WTC11 (cell line): ENCODE measurements at regions of chr4 and their contacts with region 1.

Region 1: GRCh38 chr4:154928640-154929257 is 147.7 kb downstream of the RBM46 start:
- DNase-seq: peak; percentile 40
- ATAC-seq: peak; percentile 75
- H3K4me3 Mint-ChIP-seq: no peak overlapping the region
- H3K27ac Mint-ChIP-seq: no peak overlapping the region
- H3K4me1 Mint-ChIP-seq: no peaks in the 10 kb centered on the region
- H3K27me3 Mint-ChIP-seq: no peaks in the 10 kb centered on the region
- CTCF ChIP-seq: peak; percentile 45; the same call in 1 of the 2 replicates

Region 2: GRCh38 chr4:154626793-154627484 is 301.8 kb before region 1 on chr4:
- CTCF ChIA-PET with region 1: interaction called, 11 read pairs
- POLR2A ChIA-PET with region 1: no interaction called
- DNase-seq: peak; percentile 84
- ATAC-seq: peak; percentile 94
- H3K4me3 Mint-ChIP-seq: no peak overlapping the region
- H3K27ac Mint-ChIP-seq: no peak overlapping the region
- H3K4me1 Mint-ChIP-seq: peaks cover 6% of the 10 kb centered on the region
- H3K27me3 Mint-ChIP-seq: peaks cover 10% of the 10 kb centered on the region
- CTCF ChIP-seq: peak; percentile 41; the same call in 1 of the 2 replicates

Region 3: DNA sequence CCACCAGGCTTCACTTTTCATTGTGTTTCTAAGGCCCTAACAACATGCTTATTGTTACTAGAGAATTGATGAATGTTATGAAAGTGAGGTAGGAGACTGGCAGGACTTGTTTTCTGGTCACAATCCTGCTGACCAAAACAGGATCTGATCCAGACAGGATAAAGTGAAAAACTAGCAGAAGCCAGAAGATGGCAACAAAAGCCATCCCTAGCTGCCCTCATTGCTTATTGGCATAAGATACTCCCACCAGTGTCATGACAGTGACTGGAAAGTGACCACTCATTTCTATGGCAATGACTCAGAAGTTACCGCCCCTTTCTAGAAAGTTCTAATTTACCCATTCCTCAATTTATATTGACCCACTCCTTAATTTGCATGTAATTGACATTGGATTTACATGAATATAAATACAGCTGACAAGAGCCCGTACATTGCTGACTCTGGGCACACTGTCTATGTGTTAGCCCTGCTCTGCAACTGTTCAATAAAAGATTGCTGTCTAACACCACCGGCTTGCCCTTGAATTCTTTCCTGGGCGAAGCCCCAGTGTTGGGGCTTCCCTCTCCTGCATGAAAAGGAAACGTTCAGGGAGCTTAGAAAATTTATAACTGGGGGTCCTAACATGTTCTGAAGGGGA is 286.3 kb before region 1 on chr4:
- CTCF ChIA-PET with region 1: interaction called, 23 read pairs
- POLR2A ChIA-PET with region 1: no interaction called
- DNase-seq: no peak
- ATAC-seq: peak; percentile 82
- H3K4me3 Mint-ChIP-seq: no peak overlapping the region
- H3K27ac Mint-ChIP-seq: no peak overlapping the region
- H3K4me1 Mint-ChIP-seq: peaks cover 12% of the 10 kb centered on the region
- H3K27me3 Mint-ChIP-seq: no peaks in the 10 kb centered on the region
- CTCF ChIP-seq: no peak

Region 4: DNA sequence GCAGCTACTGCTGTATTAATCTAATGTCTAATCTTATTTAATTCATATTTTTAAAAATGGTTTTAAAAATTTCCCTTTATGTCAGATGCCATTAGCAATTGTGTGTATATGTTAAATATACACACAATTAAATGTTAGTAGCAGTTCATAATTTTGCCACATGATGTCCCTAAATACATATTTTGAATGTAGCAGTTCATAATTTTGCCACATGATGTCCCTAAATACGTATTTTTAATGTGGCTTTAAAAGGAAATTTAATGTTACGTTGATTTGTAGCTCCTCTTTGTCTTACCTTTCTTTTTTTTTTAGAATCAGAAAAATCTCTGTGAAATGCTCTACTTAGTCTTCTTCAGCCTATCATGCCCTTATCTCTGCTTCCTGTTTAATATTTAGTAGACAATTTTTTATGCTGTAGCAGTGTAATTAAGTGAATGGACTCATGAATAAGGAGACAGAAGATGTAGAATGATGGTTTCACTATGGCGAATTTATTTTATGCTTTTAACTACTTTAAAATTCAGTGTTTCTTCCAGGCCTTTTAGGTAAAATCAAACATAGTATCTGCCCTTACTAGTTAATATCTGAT is 121.6 kb before region 1 on chr4:
- CTCF ChIA-PET with region 1: interaction called, 19 read pairs
- POLR2A ChIA-PET with region 1: no interaction called
- DNase-seq: no peak
- ATAC-seq: no peak
- H3K4me3 Mint-ChIP-seq: no peak overlapping the region
- H3K27ac Mint-ChIP-seq: no peak overlapping the region
- H3K4me1 Mint-ChIP-seq: no peaks in the 10 kb centered on the region
- H3K27me3 Mint-ChIP-seq: no peaks in the 10 kb centered on the region
- CTCF ChIP-seq: no peak; the same call in 1 of the 2 replicates

Region 5: DNA sequence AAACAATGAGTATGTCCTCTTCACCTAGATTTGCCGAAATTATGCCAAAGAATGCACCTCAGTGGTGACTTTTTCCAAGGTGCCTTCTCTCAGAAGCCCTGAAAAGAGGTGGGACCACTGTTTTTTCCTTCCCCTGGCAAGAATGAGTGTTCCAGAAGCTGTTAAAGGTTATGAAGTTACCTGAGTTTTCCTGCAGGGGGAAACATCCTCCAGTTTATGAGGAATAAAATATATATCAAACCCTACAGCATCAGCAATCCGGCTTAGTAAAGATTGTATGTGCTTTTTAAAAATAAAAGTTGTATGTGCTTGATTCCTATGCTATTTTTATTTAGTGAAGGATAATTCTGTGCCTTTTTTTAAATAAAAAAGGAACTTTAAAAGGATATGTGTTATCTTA is 74.4 kb before region 1 on chr4:
- CTCF ChIA-PET with region 1: interaction called, 22 read pairs
- POLR2A ChIA-PET with region 1: no interaction called
- DNase-seq: no peak
- ATAC-seq: peak; percentile 79
- H3K4me3 Mint-ChIP-seq: no peak overlapping the region
- H3K27ac Mint-ChIP-seq: no peak overlapping the region
- H3K4me1 Mint-ChIP-seq: peaks cover 5% of the 10 kb centered on the region
- H3K27me3 Mint-ChIP-seq: no peaks in the 10 kb centered on the region
- CTCF ChIP-seq: no peak; the same call in 1 of the 2 replicates

Region 6: DNA sequence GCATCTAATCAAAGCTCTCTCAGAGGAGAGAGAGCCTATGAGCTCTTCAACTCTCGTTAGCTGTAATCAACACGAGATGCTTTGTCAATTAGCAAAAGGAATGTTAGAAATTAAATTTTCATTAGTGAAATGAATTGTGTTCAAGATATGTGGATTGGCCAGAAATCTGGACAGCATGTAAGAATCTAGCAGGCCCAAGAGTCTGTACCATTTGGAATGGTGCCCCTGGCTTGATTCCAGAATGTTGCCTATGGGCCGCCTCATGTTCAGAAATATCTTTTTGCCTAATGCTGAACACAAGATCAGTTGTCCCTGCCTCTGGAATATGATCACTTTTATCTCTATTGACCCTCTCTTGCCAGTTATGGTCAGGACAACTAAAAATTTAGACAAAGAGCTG is 59.4 kb before region 1 on chr4:
- CTCF ChIA-PET with region 1: interaction called, 11 read pairs
- POLR2A ChIA-PET with region 1: no interaction called
- DNase-seq: no peak
- ATAC-seq: no peak
- H3K4me3 Mint-ChIP-seq: no peak overlapping the region
- H3K27ac Mint-ChIP-seq: no peak overlapping the region
- H3K4me1 Mint-ChIP-seq: peaks cover 49% of the 10 kb centered on the region
- H3K27me3 Mint-ChIP-seq: peaks cover 10% of the 10 kb centered on the region
- CTCF ChIP-seq: no peak

Region 7: DNA sequence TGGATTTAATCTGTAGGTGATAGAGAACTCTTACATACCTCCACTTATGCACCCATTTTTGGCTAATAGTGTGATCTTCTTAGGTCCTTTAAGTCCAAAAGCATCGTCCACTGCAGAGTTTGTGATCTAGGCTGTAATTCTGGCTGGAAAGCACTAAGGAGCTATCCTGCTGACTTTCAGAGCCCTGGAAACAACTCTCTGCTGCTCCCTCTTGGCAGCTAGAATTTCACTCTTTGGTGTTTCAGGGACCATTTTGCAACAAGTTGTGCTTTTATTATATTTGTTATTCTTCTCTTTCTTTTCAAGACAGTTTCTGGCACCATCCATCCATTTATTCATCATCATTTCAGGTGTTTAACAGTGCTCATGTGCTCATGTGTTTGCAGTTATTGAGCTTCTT is 17.7 kb before region 1 on chr4:
- CTCF ChIA-PET with region 1: interaction called, 18 read pairs
- POLR2A ChIA-PET with region 1: interaction called, 3 read pairs
- DNase-seq: no peak
- ATAC-seq: peak; percentile 70
- H3K4me3 Mint-ChIP-seq: no peak overlapping the region
- H3K27ac Mint-ChIP-seq: no peak overlapping the region
- H3K4me1 Mint-ChIP-seq: peaks cover 37% of the 10 kb centered on the region
- H3K27me3 Mint-ChIP-seq: no peaks in the 10 kb centered on the region
- CTCF ChIP-seq: no peak